ENCODE measurements at regions of chr2 and their contacts with region 1.

Region 1: DNA sequence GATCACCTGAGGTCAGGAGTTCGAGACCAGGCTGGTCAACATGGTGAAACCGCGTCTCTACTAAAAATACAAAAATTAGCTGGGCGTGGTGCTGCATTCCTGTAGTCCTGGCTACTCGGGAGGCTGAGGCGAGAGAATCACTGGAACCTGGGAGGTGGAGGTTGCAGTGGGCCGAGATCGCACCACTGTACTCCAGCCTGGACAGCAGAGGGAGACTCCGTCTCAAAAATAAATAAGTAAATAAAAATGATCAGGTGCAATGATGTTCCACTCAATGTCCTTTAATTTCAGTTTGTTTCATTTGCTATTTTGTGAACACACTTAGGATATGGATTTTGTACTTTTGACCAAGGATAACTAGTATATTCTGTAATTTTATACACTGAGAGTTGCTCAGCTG is 9.3 kb downstream of the HADHA start:
- DNase-seq: no peak
- ATAC-seq: peak in 3 of 4 donors; percentile 33 to 45 (median 42)
- H3K4me3 ChIP-seq: no peak overlapping the region
- H3K27ac ChIP-seq: no peak overlapping the region
- H3K4me1 ChIP-seq: peaks cover 10 to 23% (median 16%) of the 10 kb centered on the region in 3 donors
- H3K27me3 ChIP-seq: no peaks in the 10 kb centered on the region
- CTCF ChIP-seq: no peak

Region 2: GRCh38 chr2:26148501-26148900 is 86.6 kb before region 1 on chr2:
- intact Hi-C with region 1: no loop called
- DNase-seq: no peak
- ATAC-seq: no peak
- H3K4me3 ChIP-seq: no peak overlapping the region
- H3K27ac ChIP-seq: no peak overlapping the region
- H3K4me1 ChIP-seq: peaks cover 4 to 8% (median 7%) of the 10 kb centered on the region in 3 donors
- H3K27me3 ChIP-seq: no peaks in the 10 kb centered on the region
- CTCF ChIP-seq: no peak

Region 3: GRCh38 chr2:26327291-26328272 is 92.5 kb after region 1 on chr2:
- intact Hi-C with region 1: loop called in 2 of 3 experiments (anchors 10 kb)
- DNase-seq: no peak
- ATAC-seq: no peak
- H3K4me3 ChIP-seq: no peak overlapping the region
- H3K27ac ChIP-seq: no peak overlapping the region
- H3K4me1 ChIP-seq: no peaks in the 10 kb centered on the region
- H3K27me3 ChIP-seq: no peaks in the 10 kb centered on the region
- CTCF ChIP-seq: no peak

Region 4: GRCh38 chr2:26503231-26503880 is 268.3 kb after region 1 on chr2:
- intact Hi-C with region 1: no loop called
- DNase-seq: peak; percentile 85 to 95 (median 90)
- ATAC-seq: peak; percentile 98 to 99 (median 98)
- H3K4me3 ChIP-seq: peak overlapping the region; percentile 28 to 54 (median 41)
- H3K27ac ChIP-seq: peak overlapping the region in 3 of 4 donors; percentile 22 to 39 (median 23)
- H3K4me1 ChIP-seq: no peaks in the 10 kb centered on the region
- H3K27me3 ChIP-seq: no peaks in the 10 kb centered on the region
- CTCF ChIP-seq: peak; percentile 80 to 92 (median 86)

Measured in pancreas (tissue), 10 donors.